HCT116 (cell line): ENCODE measurements at regions of chr6 and their contacts with region 1.

Region 1: DNA sequence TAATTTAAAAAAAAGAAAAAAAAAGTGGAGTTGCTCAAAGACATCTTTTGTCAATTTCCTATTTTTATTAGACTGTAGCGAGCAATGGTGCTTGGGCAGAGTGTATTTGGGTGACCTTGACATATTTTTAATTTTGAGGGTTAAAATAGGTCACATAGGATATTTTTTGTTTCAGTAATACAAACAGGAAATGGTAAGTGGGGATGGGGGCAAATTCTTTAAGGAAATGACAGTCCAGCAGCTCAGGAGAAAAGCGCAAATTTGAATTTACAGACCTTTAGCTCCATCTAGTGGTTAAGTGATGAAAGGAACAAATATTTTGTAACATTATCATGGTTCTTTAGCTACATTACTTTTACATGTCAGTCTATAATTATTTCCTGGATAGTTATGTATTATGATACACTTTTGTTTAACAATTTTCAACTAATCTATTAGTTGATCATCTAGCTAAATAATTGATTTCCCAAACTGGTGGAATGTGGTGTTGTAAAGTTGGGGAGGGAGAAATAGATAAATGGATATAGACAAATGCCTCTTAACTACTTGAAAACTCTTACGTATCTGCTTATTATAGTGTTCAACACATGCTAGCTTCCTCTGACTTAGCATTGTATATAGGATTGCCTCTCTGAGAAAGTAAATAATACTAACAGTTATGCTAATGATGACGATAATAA is 10.0 kb downstream of the CITED2 start:
- DNase-seq: no peak
- ATAC-seq: peak; percentile 67
- H3K4me3 ChIP-seq: no peak overlapping the region
- H3K27ac ChIP-seq: no peak overlapping the region
- H3K4me1 ChIP-seq: peaks cover 5 to 6% of the 10 kb centered on the region in 2 experiments; a peak in 3 of 4 replicates
- H3K27me3 ChIP-seq: no peaks in the 10 kb centered on the region
- CTCF ChIP-seq: peak; percentile 19 to 82 (median 69); a peak in 3 of 6 replicates
- POLR2A ChIP-seq: no peak
- RAD21 ChIP-seq: peak; percentile 94

Region 2: GRCh38 chr6:137832110-137832509 is 1532.3 kb before region 1 on chr6:
- CTCF ChIA-PET with region 1: no interaction called
- POLR2A ChIA-PET with region 1: no interaction called
- RAD21 ChIA-PET with region 1: no interaction called
- intact Hi-C with region 1: no loop called
- DNase-seq: peak; percentile 73
- ATAC-seq: peak; percentile 80
- H3K4me3 ChIP-seq: 0 out of 4 replicates have a peak overlapping the region, but pooled peaks of 1 of the 2 experiments have one; percentile 1
- H3K27ac ChIP-seq: no peak overlapping the region
- H3K4me1 ChIP-seq: peaks cover 4 to 48% of the 10 kb centered on the region in 2 experiments; a peak in 3 of 4 replicates
- H3K27me3 ChIP-seq: no peaks in the 10 kb centered on the region
- CTCF ChIP-seq: no peak
- POLR2A ChIP-seq: no peak
- RAD21 ChIP-seq: no peak

Region 3: GRCh38 chr6:138001750-138002349 is 1362.6 kb before region 1 on chr6:
- CTCF ChIA-PET with region 1: interaction called, 4 read pairs
- POLR2A ChIA-PET with region 1: no interaction called
- RAD21 ChIA-PET with region 1: no interaction called
- intact Hi-C with region 1: loop called (anchors 10 kb)
- DNase-seq: peak; percentile 48
- ATAC-seq: peak; percentile 52; the same call in 1 of the 2 replicates
- H3K4me3 ChIP-seq: no peak overlapping the region
- H3K27ac ChIP-seq: no peak overlapping the region
- H3K4me1 ChIP-seq: peaks cover 0 to 10% of the 10 kb centered on the region in 2 experiments; a peak in 3 of 4 replicates
- H3K27me3 ChIP-seq: no peaks in the 10 kb centered on the region
- CTCF ChIP-seq: peak; percentile 86 to 95 (median 92)
- POLR2A ChIP-seq: no peak
- RAD21 ChIP-seq: peak; percentile 95

Region 4: GRCh38 chr6:138588805-138589434 is 775.5 kb before region 1 on chr6:
- CTCF ChIA-PET with region 1: no interaction called
- POLR2A ChIA-PET with region 1: no interaction called
- RAD21 ChIA-PET with region 1: no interaction called
- intact Hi-C with region 1: loop called (anchors 1 kb)
- DNase-seq: peak; percentile 67
- ATAC-seq: peak; percentile 64
- H3K4me3 ChIP-seq: no peak overlapping the region
- H3K27ac ChIP-seq: no peak overlapping the region
- H3K4me1 ChIP-seq: peaks cover 6 to 25% of the 10 kb centered on the region in 2 experiments; a peak in 3 of 4 replicates
- H3K27me3 ChIP-seq: no peaks in the 10 kb centered on the region
- CTCF ChIP-seq: peak; percentile 76 to 94 (median 88); a peak in 5 of 6 replicates
- POLR2A ChIP-seq: no peak
- RAD21 ChIP-seq: peak; percentile 91

Region 5: DNA sequence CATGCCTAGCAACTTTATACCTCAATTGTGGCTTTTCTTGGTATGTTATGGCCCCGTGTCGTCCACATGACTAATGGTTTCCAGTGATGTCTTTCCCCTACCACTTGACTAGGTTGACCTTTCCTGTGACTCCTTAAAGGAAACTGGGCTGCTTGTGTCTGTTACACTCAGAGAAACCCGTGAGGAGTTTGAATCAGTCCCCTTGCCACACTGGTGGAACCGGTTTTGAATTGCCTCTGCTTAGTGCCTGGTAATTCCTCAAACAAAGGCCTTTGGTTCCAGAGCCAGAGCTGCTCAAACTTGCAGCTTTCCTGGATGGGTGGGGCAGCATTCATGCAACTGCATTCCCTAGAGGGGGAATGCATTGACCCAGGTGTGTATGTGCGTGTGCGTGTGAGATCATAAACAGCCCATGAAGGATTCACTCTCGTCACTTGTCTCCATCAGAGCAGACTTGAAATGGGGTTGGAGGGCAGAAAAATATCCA is 546.6 kb before region 1 on chr6:
- CTCF ChIA-PET with region 1: interaction called, 35 read pairs
- POLR2A ChIA-PET with region 1: no interaction called
- RAD21 ChIA-PET with region 1: interaction called, 3 read pairs
- intact Hi-C with region 1: loop called (anchors 1 kb)
- DNase-seq: peak; percentile 99
- ATAC-seq: peak; percentile 93
- H3K4me3 ChIP-seq: peak overlapping the region in 1 of 2 experiments; percentile 23; a peak in 2 of 4 replicates
- H3K27ac ChIP-seq: peak overlapping the region; percentile 77
- H3K4me1 ChIP-seq: peaks cover 28 to 44% of the 10 kb centered on the region in 2 experiments
- H3K27me3 ChIP-seq: no peaks in the 10 kb centered on the region
- CTCF ChIP-seq: no peak
- POLR2A ChIP-seq: no peak
- RAD21 ChIP-seq: peak; percentile 53

Region 6: GRCh38 chr6:139124887-139125672 is 239.4 kb before region 1 on chr6:
- CTCF ChIA-PET with region 1: interaction called, 18 read pairs
- POLR2A ChIA-PET with region 1: no interaction called
- RAD21 ChIA-PET with region 1: interaction called in 1 of 2 experiments, 4 read pairs
- intact Hi-C with region 1: loop called (anchors 1 kb)
- DNase-seq: peak; percentile 70
- ATAC-seq: peak; percentile 100
- H3K4me3 ChIP-seq: no peak overlapping the region
- H3K27ac ChIP-seq: no peak overlapping the region
- H3K4me1 ChIP-seq: peaks cover 0 to 6% of the 10 kb centered on the region in 2 experiments; a peak in 3 of 4 replicates
- H3K27me3 ChIP-seq: no peaks in the 10 kb centered on the region
- CTCF ChIP-seq: peak; percentile 50 to 73 (median 61); a peak in 4 of 6 replicates
- POLR2A ChIP-seq: no peak
- RAD21 ChIP-seq: peak; percentile 81

Region 7: DNA sequence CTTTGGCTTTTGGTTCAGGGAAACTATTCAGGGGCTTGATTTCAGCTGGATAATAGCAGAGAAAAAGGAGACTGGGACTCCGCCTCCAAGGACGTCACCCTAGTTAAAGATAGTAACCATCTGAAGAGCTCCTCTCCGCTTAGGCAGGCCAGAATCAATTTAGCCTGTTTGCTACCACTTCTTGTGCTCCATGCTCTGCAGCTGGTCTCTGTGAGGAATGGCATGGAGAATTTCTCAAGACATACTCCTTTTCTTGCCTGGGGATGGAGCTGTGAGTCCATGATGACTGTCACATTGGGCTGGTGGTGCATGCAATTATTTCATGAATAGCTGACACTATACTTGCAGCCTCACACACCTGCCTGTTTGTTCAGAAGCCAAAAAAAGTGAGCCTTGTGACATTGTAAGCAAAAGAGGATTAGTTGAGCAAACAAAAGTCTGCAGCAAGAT is 134.0 kb before region 1 on chr6:
- CTCF ChIA-PET with region 1: interaction called, 17 read pairs
- POLR2A ChIA-PET with region 1: interaction called, 3 read pairs
- RAD21 ChIA-PET with region 1: interaction called, 5 read pairs
- intact Hi-C with region 1: no loop called
- DNase-seq: no peak
- ATAC-seq: no peak
- H3K4me3 ChIP-seq: no peak overlapping the region
- H3K27ac ChIP-seq: no peak overlapping the region
- H3K4me1 ChIP-seq: no peaks in the 10 kb centered on the region
- H3K27me3 ChIP-seq: no peaks in the 10 kb centered on the region
- CTCF ChIP-seq: 0 out of 6 replicates have a peak, but pooled peaks of 1 of the 3 experiments have one; percentile 7
- POLR2A ChIP-seq: no peak
- RAD21 ChIP-seq: peak; percentile 50; the same call in 1 of the 2 replicates

Region 8: DNA sequence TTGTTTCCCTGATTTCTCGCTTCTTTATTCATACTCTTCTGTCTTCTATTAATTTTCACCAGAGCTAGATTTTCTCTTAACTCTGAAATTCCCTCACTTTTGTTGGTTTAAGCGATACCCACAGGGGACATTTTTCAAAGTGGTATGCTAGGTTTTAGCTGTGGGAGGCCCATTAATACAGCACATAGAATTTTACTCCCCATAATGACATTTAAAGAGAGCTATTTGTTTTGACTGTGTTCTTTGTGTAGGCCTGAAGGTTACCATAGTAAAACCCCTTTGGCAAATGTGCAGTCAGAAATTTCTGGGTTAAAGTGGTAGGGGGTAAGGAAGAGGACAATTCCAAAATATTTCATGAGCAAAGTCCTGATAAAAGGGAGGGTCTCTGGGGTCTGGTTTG is 731.1 kb after region 1 on chr6:
- CTCF ChIA-PET with region 1: no interaction called
- POLR2A ChIA-PET with region 1: no interaction called
- RAD21 ChIA-PET with region 1: no interaction called
- intact Hi-C with region 1: no loop called
- DNase-seq: no peak
- ATAC-seq: no peak
- H3K4me3 ChIP-seq: no peak overlapping the region
- H3K27ac ChIP-seq: no peak overlapping the region
- H3K4me1 ChIP-seq: no peaks in the 10 kb centered on the region
- H3K27me3 ChIP-seq: no peaks in the 10 kb centered on the region
- CTCF ChIP-seq: no peak
- POLR2A ChIP-seq: no peak
- RAD21 ChIP-seq: no peak